Right cardiac atrium (tissue), 5 donors: ENCODE measurements at regions of chr10 and their contacts with region 1.

Region 1: GRCh38 chr10:79445141-79445976 is at the start of gene ZCCHC24:
- DNase-seq: peak; percentile 99 to 100 (median 99)
- ATAC-seq: peak; percentile 96
- H3K4me3 ChIP-seq: peak within 1 kb of the TSS; percentile 95
- H3K27ac ChIP-seq: peak within 1 kb of the TSS; percentile 96
- H3K4me1 ChIP-seq: peaks cover 18% of the 10 kb centered on the region
- H3K27me3 ChIP-seq: no peaks in the 10 kb centered on the region
- total RNA-seq, gene ZCCHC24: 60.4 to 75.3 (median 63.8) TPM

Region 2: DNA sequence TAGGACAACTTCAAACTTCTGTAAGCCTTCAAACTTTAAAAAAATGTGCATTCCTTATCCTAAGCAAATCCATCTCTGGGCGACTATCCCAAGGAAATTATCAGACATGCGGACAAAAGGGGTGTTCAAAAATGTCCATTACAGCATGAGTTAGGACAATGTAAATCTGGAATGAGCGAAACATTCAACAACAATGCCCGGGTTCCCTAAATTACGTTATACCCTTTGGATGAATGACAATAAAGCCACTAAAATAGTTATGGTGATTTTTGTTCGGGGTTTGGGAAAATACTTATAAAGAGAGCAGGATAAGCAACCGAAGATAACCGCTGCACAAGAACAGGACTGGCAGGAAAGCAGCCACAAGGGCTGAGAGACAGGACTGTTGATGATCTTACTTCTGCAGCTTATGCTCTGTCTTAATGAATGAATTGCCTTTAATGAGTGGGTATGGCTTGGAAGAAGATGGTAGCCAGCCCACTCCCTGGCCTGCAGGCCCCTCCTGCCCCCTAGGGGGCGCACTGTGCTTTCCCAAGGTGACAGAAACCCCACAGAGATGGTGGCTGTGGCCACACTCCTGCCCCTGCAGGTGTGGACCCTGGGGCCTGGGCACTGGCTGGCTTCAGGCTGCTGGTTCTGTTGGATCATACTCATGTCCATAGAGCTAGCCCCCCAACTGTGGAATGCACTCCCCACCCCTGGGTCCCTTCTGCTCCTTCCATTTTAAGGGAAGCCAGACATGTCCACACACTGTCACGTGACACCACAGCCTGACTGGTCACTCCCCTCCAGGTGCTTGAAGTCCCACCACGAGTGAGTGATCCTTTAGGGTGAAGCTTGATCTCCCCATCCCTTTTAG is 45.0 kb before region 1 on chr10:
- intact Hi-C with region 1: loop called (anchors 1 to 10 kb)
- DNase-seq: peak; percentile 55 to 84 (median 84)
- ATAC-seq: no peak
- H3K4me3 ChIP-seq: no peak overlapping the region
- H3K27ac ChIP-seq: peak overlapping the region; percentile 85
- H3K4me1 ChIP-seq: peaks cover 65% of the 10 kb centered on the region
- H3K27me3 ChIP-seq: no peaks in the 10 kb centered on the region

Region 3: GRCh38 chr10:79407811-79408795 is 37.3 kb before region 1 on chr10:
- intact Hi-C with region 1: loop called in 2 of 4 experiments (anchors 5 kb)
- DNase-seq: peak; percentile 62 to 84 (median 82)
- ATAC-seq: peak; percentile 17 to 33
- H3K4me3 ChIP-seq: no peak overlapping the region
- H3K27ac ChIP-seq: peak overlapping the region; percentile 7
- H3K4me1 ChIP-seq: peaks cover 65% of the 10 kb centered on the region
- H3K27me3 ChIP-seq: no peaks in the 10 kb centered on the region